ENCODE measurements at regions of chr2 and their contacts with region 1.

Region 1: DNA sequence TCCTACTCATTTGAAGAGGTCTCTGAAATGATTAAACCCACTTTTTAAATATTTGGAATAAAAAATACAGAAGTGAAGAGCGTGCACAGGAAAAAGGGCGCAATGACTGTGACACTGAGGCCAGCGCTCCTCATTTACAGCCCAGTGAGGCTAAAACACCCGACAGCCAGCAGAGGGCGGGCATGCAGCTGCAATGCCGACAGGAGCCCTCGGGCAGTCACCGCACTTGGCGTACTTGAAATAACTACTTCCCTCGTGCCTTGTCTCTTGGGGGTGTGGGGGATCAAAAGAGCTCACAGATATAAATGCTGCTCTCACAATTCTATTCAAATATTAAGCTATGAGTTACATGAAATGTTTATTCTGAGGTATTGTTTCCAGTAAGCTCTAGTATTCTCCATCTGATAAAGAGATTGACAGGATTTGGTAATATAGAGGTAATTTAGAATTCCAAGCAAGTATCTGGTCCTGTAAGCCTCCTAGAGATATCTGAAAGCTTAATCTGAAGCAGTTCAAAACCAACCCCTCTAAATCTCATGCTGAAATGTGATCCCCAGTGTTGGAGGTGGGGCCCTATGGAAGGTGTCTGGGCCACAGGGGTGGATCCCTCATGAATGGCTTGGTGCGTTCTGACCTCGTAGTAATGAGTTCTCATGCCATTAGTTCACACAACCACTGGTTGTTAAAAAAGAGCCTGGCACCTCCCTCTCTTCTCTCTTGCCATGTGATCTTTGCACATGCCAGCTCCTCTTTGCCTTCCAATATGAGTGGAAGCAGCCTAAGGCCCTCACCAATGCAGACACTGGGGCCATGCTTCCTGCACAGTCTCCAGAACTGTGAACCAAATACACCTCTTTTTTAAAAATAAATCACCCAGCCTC is 93.6 kb downstream of the ZAP70 start:
- DNase-seq: peak; percentile 91
- ATAC-seq: peak; percentile 99

Region 2: GRCh38 chr2:97995734-97996624 is 189.0 kb after region 1 on chr2 and contains the start of gene TMEM131:
- intact Hi-C with region 1: loop called (anchors 10 kb)
- DNase-seq: peak; percentile 96
- ATAC-seq: peak; percentile 98
- total RNA-seq, gene TMEM131: 26.7 TPM

Measured in Right ventricle myocardium superior (tissue), 1 donor.